CD4-positive, alpha-beta memory T cell (primary cell): ENCODE measurements at regions of chr2 and their contacts with region 1.

Region 1: DNA sequence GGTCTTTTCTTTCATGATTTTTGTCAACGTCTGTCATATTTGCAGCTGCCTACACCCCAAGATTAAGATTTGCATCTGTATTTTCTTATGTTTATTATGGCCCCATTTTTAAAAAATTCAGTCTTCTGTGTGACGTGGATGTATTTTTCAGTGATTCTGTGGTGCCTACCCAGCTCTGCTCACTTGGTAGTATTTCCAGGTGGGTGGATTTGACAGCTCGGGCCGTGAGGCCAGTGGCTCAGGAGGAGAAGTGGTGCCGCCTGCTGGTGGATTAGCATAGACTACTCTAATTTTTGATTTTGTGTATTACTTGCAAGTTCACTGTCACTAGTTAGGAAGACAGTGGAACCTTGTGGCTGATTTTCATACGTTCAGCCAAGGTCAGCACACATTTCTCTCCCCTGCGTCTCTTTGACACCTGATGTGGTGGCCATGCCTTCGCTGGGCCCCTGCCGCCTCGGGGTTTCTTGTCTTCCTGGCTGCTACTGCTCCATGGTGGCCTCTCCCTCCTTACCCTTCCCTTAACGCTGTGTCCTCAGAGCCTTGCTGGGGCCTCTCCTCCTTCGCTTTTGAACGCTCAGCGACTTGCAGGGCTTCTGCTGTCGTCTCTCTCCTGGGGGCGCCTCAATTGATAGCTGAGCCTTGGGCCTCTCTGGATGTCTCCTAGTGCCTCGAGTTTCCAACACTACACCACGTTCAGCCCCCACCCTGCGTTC is 89.3 kb downstream of the DGKD start:
- DNase-seq: peak; percentile 80 to 83 (median 83)
- H3K4me3 ChIP-seq: no peak overlapping the region
- H3K4me3 Mint-ChIP-seq: peak overlapping the region in 3 of 8 donors; percentile 45 to 58 (median 55)
- H3K27ac ChIP-seq: no peak overlapping the region
- H3K27ac Mint-ChIP-seq: peak overlapping the region; percentile 8 to 92 (median 86)
- H3K4me1 ChIP-seq: peaks cover 7% of the 10 kb centered on the region
- H3K4me1 Mint-ChIP-seq: peaks cover 10 to 29% (median 16%) of the 10 kb centered on the region in 4 donors
- H3K27me3 ChIP-seq: no peaks in the 10 kb centered on the region
- H3K27me3 Mint-ChIP-seq: no peaks in the 10 kb centered on the region

Region 2: DNA sequence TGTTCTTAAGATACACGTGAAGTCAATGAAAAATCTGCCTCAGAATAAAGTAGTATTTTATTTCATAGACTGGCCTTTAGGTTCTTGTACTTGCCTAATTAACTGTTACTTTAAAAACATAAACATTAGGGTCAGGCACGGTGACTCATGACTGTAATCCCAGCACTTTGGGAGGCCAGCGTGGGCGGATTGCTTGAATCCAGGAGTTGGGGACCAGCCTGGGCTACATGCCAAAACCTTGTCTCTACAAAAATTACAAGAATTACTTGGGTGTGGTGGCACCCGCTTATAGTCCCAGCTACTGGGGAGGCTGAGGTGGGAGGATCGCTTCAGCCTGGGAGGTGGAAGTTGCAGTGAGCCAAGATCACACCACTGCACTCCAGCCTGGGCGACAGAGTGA is 589.5 kb before region 1 on chr2:
- CTCF ChIA-PET with region 1: no interaction called
- POLR2A ChIA-PET with region 1: no interaction called
- intact Hi-C with region 1: loop called (anchors 1 kb)
- DNase-seq: no peak
- H3K4me3 ChIP-seq: no peak overlapping the region
- H3K4me3 Mint-ChIP-seq: no peak overlapping the region
- H3K27ac ChIP-seq: no peak overlapping the region
- H3K27ac Mint-ChIP-seq: peak overlapping the region in 1 of 7 donors; percentile 35
- H3K4me1 ChIP-seq: no peaks in the 10 kb centered on the region
- H3K4me1 Mint-ChIP-seq: no peaks in the 10 kb centered on the region
- H3K27me3 ChIP-seq: no peaks in the 10 kb centered on the region
- H3K27me3 Mint-ChIP-seq: no peaks in the 10 kb centered on the region

Region 3: DNA sequence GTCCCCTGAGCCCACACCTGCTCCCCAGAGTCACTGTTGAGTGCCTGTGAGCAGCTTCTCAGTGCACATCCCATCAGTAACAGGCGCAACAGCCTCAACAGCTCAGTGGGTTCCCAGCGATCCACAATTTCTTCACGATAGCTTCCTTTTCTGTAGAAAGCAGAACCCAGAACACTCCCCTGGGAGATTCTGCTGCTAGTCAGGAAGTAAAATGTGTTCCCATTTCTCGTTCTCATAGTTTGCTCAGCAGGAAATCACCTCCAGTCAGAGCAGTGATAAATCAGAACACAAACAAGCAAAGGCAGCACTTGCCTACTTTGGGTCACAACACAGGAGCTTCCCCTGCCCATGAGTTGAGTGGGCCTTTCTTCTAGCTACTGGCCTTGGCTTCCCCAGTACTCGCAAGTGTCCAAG is 241.1 kb before region 1 on chr2:
- CTCF ChIA-PET with region 1: no interaction called
- POLR2A ChIA-PET with region 1: no interaction called
- intact Hi-C with region 1: no loop called
- DNase-seq: no peak
- H3K4me3 ChIP-seq: no peak overlapping the region
- H3K4me3 Mint-ChIP-seq: peak overlapping the region in 1 of 8 donors; percentile 20
- H3K27ac ChIP-seq: no peak overlapping the region
- H3K27ac Mint-ChIP-seq: peak overlapping the region in 4 of 7 donors; percentile 21 to 64 (median 52)
- H3K4me1 ChIP-seq: no peaks in the 10 kb centered on the region
- H3K4me1 Mint-ChIP-seq: peaks cover 1 to 5% (median 3%) of the 10 kb centered on the region in 4 donors
- H3K27me3 ChIP-seq: no peaks in the 10 kb centered on the region
- H3K27me3 Mint-ChIP-seq: no peaks in the 10 kb centered on the region

Region 4: GRCh38 chr2:233353769-233354499 is 89.7 kb before region 1 on chr2 and contains the start of gene DGKD:
- CTCF ChIA-PET with region 1: interaction called, 13 read pairs
- POLR2A ChIA-PET with region 1: interaction called, 3 read pairs
- intact Hi-C with region 1: loop called (anchors 2 kb)
- DNase-seq: peak; percentile 63 to 72 (median 65)
- H3K4me3 ChIP-seq: peak within 1 kb of the TSS; percentile 75 to 76
- H3K4me3 Mint-ChIP-seq: peak within 1 kb of the TSS; percentile 89 to 98 (median 94)
- H3K27ac ChIP-seq: peak within 1 kb of the TSS; percentile 55
- H3K27ac Mint-ChIP-seq: peak within 1 kb of the TSS; percentile 91 to 97 (median 92)
- H3K4me1 ChIP-seq: peaks cover 48% of the 10 kb centered on the region
- H3K4me1 Mint-ChIP-seq: peaks cover 51 to 75% (median 57%) of the 10 kb centered on the region in 4 donors
- H3K27me3 ChIP-seq: no peaks in the 10 kb centered on the region
- H3K27me3 Mint-ChIP-seq: peaks cover 0 to 1% of the 10 kb centered on the region in 2 donors
- total RNA-seq, gene DGKD: 129 to 136 TPM

Region 5: GRCh38 chr2:233404222-233404621 is 39.4 kb before region 1 on chr2:
- CTCF ChIA-PET with region 1: interaction called, 510 read pairs
- POLR2A ChIA-PET with region 1: interaction called, 69 read pairs
- intact Hi-C with region 1: loop called (anchors 1 kb)
- DNase-seq: peak; percentile 74 to 78 (median 75)
- H3K4me3 ChIP-seq: no peak overlapping the region
- H3K4me3 Mint-ChIP-seq: peak overlapping the region in 2 of 8 donors; percentile 1
- H3K27ac ChIP-seq: no peak overlapping the region
- H3K27ac Mint-ChIP-seq: peak overlapping the region; percentile 14 to 91 (median 77)
- H3K4me1 ChIP-seq: peaks cover 44% of the 10 kb centered on the region
- H3K4me1 Mint-ChIP-seq: peaks cover 40 to 77% (median 58%) of the 10 kb centered on the region in 4 donors
- H3K27me3 ChIP-seq: no peaks in the 10 kb centered on the region
- H3K27me3 Mint-ChIP-seq: no peaks in the 10 kb centered on the region

Region 6: GRCh38 chr2:233413559-233414272 is 29.9 kb before region 1 on chr2:
- CTCF ChIA-PET with region 1: interaction called, 510 read pairs
- POLR2A ChIA-PET with region 1: interaction called, 69 read pairs
- intact Hi-C with region 1: loop called (anchors 1 kb)
- DNase-seq: peak in 3 of 5 donors; percentile 22 to 73 (median 30)
- H3K4me3 ChIP-seq: no peak overlapping the region
- H3K4me3 Mint-ChIP-seq: peak overlapping the region in 6 of 8 donors; percentile 10 to 80 (median 54)
- H3K27ac ChIP-seq: peak overlapping the region; percentile 21
- H3K27ac Mint-ChIP-seq: peak overlapping the region; percentile 75 to 90 (median 87)
- H3K4me1 ChIP-seq: peaks cover 99% of the 10 kb centered on the region
- H3K4me1 Mint-ChIP-seq: peaks cover 64 to 95% (median 84%) of the 10 kb centered on the region in 4 donors
- H3K27me3 ChIP-seq: no peaks in the 10 kb centered on the region
- H3K27me3 Mint-ChIP-seq: no peaks in the 10 kb centered on the region

Region 7: DNA sequence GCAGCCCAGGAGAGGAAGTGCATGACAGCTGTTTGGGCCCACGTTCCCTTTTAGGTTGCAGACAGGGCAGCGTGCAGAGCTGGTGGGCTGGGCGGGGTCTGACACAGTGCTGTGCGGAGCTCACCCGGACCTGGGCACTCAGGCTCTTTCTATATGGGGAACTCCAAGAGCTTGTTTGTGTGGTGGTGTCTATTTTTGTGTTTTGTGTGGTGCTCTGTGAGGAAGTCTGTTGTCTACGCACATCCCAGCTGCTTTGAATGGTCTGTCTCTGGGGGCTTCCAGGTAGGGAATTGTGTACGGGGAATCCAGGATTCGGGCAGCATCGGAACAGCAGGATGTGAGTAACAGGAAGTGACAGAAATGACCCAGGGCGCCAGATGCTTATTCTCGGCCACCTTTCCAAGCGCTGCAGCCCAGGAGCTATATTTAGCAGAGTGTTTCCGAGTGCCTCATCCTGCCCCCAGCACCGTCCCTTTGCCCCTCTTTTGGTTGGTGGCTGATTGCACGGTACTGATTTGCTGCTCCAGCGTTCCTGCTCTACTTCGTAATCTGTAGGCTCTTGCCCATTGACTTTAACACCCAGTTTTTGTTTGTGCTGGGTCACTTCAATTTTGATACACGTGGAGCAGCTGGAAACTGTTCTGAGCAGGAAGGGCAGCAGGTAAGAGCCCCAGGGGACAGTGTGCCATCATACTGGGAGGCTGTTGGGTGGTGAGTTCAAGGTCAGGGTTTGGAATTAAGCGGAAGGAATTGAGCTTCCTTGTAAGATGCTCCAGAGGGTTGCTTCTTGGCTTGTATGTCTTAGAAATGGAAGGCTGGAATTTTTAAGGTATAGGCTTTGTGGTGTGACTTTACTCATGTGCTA is 24.6 kb before region 1 on chr2:
- CTCF ChIA-PET with region 1: interaction called, 156 read pairs
- POLR2A ChIA-PET with region 1: interaction called, 20 read pairs
- intact Hi-C with region 1: loop called (anchors 1 kb)
- DNase-seq: peak; percentile 36 to 79 (median 45)
- H3K4me3 ChIP-seq: peak overlapping the region; percentile 53 to 56
- H3K4me3 Mint-ChIP-seq: peak overlapping the region; percentile 87 to 99 (median 92)
- H3K27ac ChIP-seq: peak overlapping the region; percentile 71
- H3K27ac Mint-ChIP-seq: peak overlapping the region; percentile 93 to 99 (median 96)
- H3K4me1 ChIP-seq: peaks cover 100% of the 10 kb centered on the region
- H3K4me1 Mint-ChIP-seq: peaks cover 73 to 99% (median 89%) of the 10 kb centered on the region in 4 donors
- H3K27me3 ChIP-seq: no peaks in the 10 kb centered on the region
- H3K27me3 Mint-ChIP-seq: no peaks in the 10 kb centered on the region

Region 8: GRCh38 chr2:233620204-233620603 is 176.6 kb after region 1 on chr2:
- CTCF ChIA-PET with region 1: no interaction called
- POLR2A ChIA-PET with region 1: no interaction called
- intact Hi-C with region 1: no loop called
- DNase-seq: no peak
- H3K4me3 ChIP-seq: no peak overlapping the region
- H3K4me3 Mint-ChIP-seq: no peak overlapping the region
- H3K27ac ChIP-seq: no peak overlapping the region
- H3K27ac Mint-ChIP-seq: no peak overlapping the region
- H3K4me1 ChIP-seq: no peaks in the 10 kb centered on the region
- H3K4me1 Mint-ChIP-seq: no peaks in the 10 kb centered on the region
- H3K27me3 ChIP-seq: no peaks in the 10 kb centered on the region
- H3K27me3 Mint-ChIP-seq: peaks cover 25 to 35% of the 10 kb centered on the region in 2 donors